Activated CD4-positive, alpha-beta memory T cell treated with anti-CD3 and anti-CD28 coated beads, Interleukin-2, amount 10 ng/mL, durations not matched to agents 7 days and 5 days (primary cell): ENCODE measurements at regions of chr19 and their contacts with region 1.

Region 1: DNA sequence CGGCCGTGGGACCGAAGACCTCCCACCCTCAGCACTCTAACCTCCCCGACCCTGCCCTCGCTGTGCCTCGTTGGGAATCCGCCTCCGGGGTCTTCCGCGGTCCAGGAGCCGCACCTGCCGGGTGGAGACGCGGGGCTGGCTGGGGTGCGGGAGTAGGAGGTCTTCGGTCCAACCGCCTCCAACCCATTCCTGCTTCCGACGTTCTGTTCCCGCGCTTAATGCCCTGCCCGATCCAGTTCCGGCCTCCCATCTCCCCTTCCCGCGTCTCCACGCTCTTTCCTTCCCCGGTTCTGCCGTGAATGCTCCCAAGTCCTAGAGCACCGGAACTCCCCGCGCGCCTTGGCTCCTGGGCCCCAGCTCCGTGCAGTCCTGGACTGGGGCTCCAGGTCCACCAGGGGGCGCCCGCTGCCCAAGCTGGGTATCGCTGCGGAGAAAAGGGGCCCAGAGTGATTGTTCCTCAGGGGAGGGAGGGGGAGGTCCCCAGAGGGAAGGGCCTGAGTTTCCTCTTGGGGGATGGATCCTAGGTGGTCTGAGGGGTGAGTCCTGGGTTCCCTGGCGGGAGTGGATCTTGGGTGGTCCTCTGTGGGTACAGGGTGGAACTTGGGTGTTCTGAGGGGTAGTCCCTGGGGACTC is 14.1 kb upstream of the TNFSF9 start:
- DNase-seq: peak; percentile 93
- H3K4me3 Mint-ChIP-seq: peak overlapping the region; percentile 98
- H3K27ac Mint-ChIP-seq: peak overlapping the region; percentile 88
- H3K4me1 Mint-ChIP-seq: peaks cover 42% of the 10 kb centered on the region
- H3K27me3 Mint-ChIP-seq: no peaks in the 10 kb centered on the region

Region 2: DNA sequence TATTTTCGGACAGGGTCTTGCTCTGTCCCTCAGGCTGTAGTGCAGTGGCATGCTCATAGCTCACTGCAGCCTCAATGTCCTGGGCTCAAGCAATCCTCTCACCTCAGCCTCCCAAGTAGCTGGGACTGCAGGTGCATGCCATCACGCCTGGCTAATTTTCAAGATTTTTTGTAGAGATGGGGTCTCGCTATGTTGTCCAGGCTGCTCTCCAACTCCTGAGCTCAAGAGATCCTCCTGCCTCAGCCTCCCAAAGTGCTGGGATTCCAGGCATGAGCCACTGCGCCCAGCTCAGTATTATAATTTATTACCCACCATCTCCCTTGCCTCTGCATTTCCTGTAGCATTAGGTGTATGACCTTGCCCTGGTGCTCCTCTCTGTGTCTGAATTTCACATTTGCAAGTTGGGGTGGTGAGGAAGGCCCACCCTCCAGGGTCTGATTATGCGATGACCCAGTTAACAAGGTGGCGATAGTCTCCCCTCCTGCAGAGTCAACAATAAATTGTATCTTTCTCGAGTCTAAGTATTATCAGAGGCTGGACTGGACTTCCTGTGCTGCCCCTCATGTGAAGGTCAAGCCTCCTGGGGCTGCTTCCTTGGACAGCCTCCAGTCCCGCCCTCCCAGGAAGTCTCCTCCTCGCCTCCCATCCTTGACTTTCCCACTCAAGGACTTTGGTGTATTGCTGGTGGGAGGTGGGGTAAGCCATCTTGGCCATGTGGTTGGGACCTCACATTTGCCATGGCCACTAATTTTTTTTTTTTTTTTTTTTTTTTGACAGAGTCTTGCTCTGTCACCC is 13.2 kb before region 1 on chr19:
- CTCF ChIA-PET with region 1: interaction called, 10 read pairs
- POLR2A ChIA-PET with region 1: interaction called, 4 read pairs
- DNase-seq: no peak
- H3K4me3 Mint-ChIP-seq: no peak overlapping the region
- H3K27ac Mint-ChIP-seq: no peak overlapping the region
- H3K4me1 Mint-ChIP-seq: peaks cover 28% of the 10 kb centered on the region
- H3K27me3 Mint-ChIP-seq: peaks cover 15% of the 10 kb centered on the region

Region 3: GRCh38 chr19:6551607-6552450 is 35.1 kb after region 1 on chr19:
- CTCF ChIA-PET with region 1: interaction called, 11 read pairs
- POLR2A ChIA-PET with region 1: no interaction called
- DNase-seq: peak; percentile 79
- H3K4me3 Mint-ChIP-seq: no peak overlapping the region
- H3K27ac Mint-ChIP-seq: no peak overlapping the region
- H3K4me1 Mint-ChIP-seq: peaks cover 22% of the 10 kb centered on the region
- H3K27me3 Mint-ChIP-seq: peaks cover 4% of the 10 kb centered on the region

Region 4: DNA sequence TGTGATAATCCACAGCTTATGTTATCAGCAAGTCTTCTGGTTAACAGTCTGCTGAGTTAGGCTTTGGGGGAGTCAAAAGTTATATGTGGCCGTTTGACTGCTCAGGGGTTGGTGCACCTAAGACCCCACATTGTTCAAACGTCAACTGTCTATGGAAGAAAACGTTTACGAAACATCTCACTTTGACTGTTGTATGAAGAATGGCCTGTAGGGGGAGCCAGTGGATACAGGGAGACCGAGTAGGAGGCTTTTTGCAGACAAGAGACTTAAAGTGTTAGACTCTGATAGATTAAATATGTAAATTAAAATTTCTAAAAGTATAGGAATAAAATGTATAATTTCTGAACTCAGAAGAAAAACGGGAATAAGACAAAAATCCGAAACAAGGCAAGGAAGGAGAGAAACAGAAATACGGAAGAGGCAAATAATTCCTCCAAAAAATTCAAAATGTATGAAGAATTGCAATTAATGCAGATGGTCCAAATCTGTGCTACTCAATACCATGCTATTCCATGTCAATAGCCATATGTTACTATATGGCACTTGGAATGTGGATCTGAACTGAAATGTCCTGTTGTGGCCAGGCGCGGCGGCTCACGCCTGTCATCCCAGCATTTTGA is 115.3 kb after region 1 on chr19:
- CTCF ChIA-PET with region 1: interaction called, 29 read pairs
- POLR2A ChIA-PET with region 1: interaction called, 3 read pairs
- DNase-seq: peak; percentile 81
- H3K4me3 Mint-ChIP-seq: no peak overlapping the region
- H3K27ac Mint-ChIP-seq: no peak overlapping the region
- H3K4me1 Mint-ChIP-seq: peaks cover 31% of the 10 kb centered on the region
- H3K27me3 Mint-ChIP-seq: peaks cover 7% of the 10 kb centered on the region

Region 5: GRCh38 chr19:6862673-6863078 is 345.9 kb after region 1 on chr19:
- CTCF ChIA-PET with region 1: interaction called, 44 read pairs
- POLR2A ChIA-PET with region 1: interaction called, 14 read pairs
- DNase-seq: peak; percentile 92
- H3K4me3 Mint-ChIP-seq: peak overlapping the region; percentile 77
- H3K27ac Mint-ChIP-seq: peak overlapping the region; percentile 67
- H3K4me1 Mint-ChIP-seq: peaks cover 16% of the 10 kb centered on the region
- H3K27me3 Mint-ChIP-seq: no peaks in the 10 kb centered on the region